ENCODE measurements at regions of chr1 and their contacts with region 1.

Region 1: DNA sequence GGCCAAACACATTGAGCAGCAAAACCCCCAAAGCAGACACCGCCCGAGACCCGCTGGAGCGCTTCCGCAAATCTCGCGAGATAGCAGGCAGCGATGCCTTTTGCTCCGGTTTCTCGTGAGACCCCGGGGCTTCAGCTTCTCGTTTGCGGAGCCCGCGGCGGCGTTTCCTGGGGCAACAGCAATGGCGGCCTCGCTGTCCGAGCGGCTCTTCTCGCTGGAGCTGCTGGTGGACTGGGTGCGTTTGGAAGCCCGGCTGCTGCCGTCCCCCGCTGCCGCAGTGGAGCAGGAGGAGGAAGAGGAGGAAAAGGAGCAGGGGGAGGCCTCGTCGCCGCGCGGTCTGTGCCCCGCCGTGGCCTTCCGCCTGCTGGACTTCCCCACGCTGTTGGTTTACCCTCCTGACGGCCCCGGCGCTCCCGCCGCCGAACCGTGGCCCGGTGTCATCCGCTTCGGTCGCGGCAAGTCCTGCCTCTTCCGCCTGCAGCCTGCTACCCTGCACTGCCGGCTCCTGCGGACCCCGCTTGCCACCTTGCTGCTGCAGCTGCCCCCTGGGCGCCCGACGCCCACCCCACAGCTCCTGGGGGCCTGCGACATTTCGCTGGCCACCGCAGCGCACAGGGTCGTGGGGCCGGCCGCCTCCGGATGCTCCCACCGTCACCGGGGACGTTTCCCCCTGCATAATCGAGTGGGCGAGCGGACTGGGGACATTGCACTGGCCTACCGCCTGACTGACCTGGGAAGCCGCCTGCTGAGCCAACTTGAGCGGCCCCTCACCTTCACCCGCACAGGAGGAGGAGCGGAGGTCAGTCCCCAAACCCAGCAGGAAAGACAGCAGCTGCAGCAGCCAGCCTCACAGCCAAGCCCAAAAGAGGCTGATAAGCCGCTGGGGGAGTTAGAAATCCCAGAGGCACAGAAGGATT is at the start of gene MAP10:
- DNase-seq: peak; percentile 84
- ATAC-seq: peak; percentile 93
- H3K4me3 Mint-ChIP-seq: peak within 1 kb of the TSS; percentile 87
- H3K27ac Mint-ChIP-seq: peak within 1 kb of the TSS; percentile 85
- H3K4me1 Mint-ChIP-seq: peaks cover 13% of the 10 kb centered on the region
- H3K27me3 Mint-ChIP-seq: peaks cover 11% of the 10 kb centered on the region
- total RNA-seq, gene MAP10: 4.0 to 4.5 TPM

Region 2: DNA sequence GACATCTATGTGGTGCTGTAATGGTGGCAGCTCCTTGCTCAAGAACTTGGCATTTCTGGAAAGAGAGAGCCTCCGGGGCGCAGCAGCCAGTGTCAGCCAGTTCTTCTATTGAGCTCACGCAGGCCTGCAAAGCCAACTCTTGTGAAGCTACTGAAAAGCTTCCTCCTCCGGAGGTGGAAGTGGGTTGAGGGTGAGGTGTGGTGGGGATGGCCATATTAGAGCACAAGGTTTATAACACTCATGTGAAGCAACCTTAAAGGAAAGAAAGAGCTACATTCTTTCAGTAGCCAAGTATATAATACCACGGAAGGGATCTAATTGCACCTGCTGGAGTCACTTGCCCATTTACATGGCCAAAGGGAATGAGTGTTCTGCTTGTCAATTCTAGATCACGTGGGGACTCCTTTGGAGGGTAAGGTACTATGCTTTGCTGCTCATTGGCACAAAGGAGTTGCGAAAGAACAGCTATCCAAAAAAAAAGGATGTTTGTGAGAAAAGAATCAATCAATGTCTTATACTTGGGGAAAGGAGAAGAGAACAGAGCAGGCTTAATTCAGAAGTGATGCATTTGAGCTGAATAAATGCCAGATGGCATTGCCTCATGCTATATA is 18.6 kb before region 1 on chr1:
- POLR2A ChIA-PET with region 1: interaction called, 13 read pairs
- DNase-seq: peak; percentile 58
- ATAC-seq: peak; percentile 99
- H3K4me3 Mint-ChIP-seq: peak overlapping the region; percentile 38
- H3K27ac Mint-ChIP-seq: peak overlapping the region; percentile 26
- H3K4me1 Mint-ChIP-seq: peaks cover 21% of the 10 kb centered on the region
- H3K27me3 Mint-ChIP-seq: peaks cover 6% of the 10 kb centered on the region

Region 3: DNA sequence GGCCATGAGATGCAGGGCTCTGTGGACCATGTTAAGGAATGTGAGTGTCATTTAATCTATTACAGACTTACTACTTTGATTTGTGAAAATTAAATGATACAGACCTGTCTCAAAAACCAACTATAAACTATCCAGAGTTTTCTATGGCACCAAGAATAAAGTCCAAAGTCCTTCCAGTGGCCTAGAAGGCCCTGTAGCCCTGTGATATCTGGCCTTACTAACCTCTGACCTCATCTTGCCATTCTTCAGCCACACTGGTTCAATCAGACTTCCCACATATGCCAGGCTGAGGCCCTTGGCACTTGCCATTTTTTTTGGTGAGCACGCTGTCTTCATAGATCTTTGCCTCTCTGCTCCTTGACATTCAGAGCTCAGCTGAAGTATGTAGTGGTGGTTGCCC is 152.5 kb after region 1 on chr1:
- POLR2A ChIA-PET with region 1: no interaction called
- DNase-seq: no peak
- ATAC-seq: no peak
- H3K4me3 Mint-ChIP-seq: no peak overlapping the region
- H3K27ac Mint-ChIP-seq: no peak overlapping the region
- H3K4me1 Mint-ChIP-seq: peaks cover 5% of the 10 kb centered on the region
- H3K27me3 Mint-ChIP-seq: no peaks in the 10 kb centered on the region